PC-3 (cell line): ENCODE measurements at regions of chr12 and their contacts with region 1.

Region 1: DNA sequence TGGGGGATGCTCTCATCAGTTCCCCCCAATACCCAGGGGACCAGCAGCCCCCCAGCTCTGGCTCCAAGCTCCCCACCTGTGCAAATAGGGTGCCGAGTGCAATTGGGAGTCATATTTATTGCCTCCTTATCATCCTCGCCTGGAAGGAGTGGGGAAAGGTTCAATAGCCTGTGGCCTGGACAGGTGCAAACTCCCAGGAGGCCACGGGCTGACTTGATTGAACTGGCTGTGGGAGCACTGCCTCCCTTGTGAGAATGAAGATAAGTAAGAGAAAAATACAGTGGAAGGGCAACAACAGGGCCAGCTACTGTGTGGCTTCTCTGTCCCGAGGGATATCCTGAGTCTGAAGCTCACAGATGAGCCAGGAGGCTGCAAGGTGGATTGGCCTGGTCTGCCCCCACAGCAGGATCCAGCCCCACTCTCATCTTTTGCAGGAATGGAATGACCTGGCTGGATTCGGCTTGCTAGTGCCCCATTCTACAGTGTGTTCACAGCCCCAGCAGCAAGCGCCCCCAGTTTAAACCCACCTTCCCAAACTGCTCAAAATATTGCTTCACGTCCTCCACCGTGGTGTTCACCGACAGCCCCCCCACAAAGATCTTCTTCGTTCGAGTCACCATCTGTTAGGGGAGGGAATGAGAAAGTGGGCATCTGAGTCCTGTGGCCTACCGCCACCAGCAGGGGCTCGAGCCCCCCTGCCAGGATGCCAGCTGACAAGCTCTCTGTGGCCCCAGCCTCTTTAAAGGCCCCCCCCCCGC is 6.3 kb downstream of the MSI1 start:
- DNase-seq: no peak
- ATAC-seq: no peak
- H3K4me3 ChIP-seq: no peak overlapping the region
- H3K27ac ChIP-seq: no peak overlapping the region
- H3K4me1 ChIP-seq: no peaks in the 10 kb centered on the region
- H3K27me3 ChIP-seq: peaks cover 5% of the 10 kb centered on the region
- CTCF ChIP-seq: no peak

Region 2: GRCh38 chr12:120428597-120429229 is 66.0 kb after region 1 on chr12:
- CTCF ChIA-PET with region 1: interaction called, 14 read pairs
- POLR2A ChIA-PET with region 1: no interaction called
- intact Hi-C with region 1: no loop called
- DNase-seq: no peak
- ATAC-seq: no peak; the same call in 1 of the 2 replicates
- H3K4me3 ChIP-seq: no peak overlapping the region
- H3K27ac ChIP-seq: no peak overlapping the region
- H3K4me1 ChIP-seq: no peaks in the 10 kb centered on the region
- H3K27me3 ChIP-seq: no peaks in the 10 kb centered on the region
- CTCF ChIP-seq: no peak

Region 3: GRCh38 chr12:120737557-120738251 is 375.0 kb after region 1 on chr12:
- CTCF ChIA-PET with region 1: no interaction called
- POLR2A ChIA-PET with region 1: no interaction called
- intact Hi-C with region 1: no loop called
- DNase-seq: no peak
- ATAC-seq: no peak; the same call in 1 of the 2 replicates
- H3K4me3 ChIP-seq: no peak overlapping the region
- H3K27ac ChIP-seq: no peak overlapping the region
- H3K4me1 ChIP-seq: no peaks in the 10 kb centered on the region
- H3K27me3 ChIP-seq: no peaks in the 10 kb centered on the region
- CTCF ChIP-seq: peak; percentile 27; the same call in 1 of the 2 replicates